ENCODE measurements at regions of chr2 and their contacts with region 1.

Region 1: DNA sequence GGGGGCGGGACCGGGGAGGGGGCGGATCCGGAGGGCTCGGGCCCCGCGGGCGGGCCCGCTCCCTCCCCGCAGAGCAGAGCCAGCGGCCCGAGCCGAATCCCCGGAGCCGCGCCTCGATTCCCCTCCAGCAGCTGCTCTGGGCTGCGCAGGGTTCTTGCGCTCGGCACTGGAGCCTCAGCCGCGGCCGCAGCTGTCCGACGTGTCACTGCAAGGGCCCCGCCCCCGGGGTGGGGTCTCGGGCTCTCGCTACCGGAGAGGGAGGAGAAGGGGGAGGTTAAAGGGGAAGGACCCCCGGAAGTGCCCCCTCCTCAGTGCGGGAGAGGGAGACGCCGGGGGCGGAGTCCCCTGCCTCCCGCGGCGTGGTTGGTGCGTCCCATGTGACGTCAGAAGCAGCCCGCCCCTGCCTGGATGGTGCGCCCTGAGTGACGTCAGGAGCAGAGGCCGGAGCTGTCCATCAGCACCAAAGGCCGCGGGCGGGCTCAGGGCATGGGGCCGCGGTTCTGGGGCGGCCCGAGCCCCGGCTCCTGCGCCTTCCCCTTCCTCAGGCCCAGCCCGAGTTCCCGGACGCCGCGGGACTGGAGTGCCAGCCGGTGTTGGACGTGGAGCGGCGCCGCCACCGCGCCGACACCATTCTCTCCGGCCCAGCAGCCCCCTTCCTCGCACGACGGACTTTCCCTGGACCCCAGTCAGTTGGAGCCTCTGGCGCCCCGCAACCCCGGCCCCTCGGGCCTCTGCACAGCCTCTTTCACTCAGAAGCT is at the starts of genes CHPF and TMEM198:
- DNase-seq: peak; percentile 97
- ATAC-seq: peak; percentile 91 to 97 (median 94)
- H3K4me3 ChIP-seq: peak within 1 kb of the TSS; percentile 40 to 92 (median 80)
- H3K27ac ChIP-seq: peak within 1 kb of the TSS; percentile 62 to 93 (median 90)
- H3K4me1 ChIP-seq: peaks cover 4 to 37% (median 32%) of the 10 kb centered on the region in 9 donors
- H3K27me3 ChIP-seq: peaks cover 0 to 59% (median 11%) of the 10 kb centered on the region in 7 donors
- CTCF ChIP-seq: no peak
- total RNA-seq, gene CHPF: 66.5 to 166 (median 95.9) TPM
- total RNA-seq, gene TMEM198: 0.59 to 3.5 (median 1.6) TPM

Region 2: GRCh38 chr2:218631837-218632236 is 911.9 kb before region 1 on chr2:
- intact Hi-C with region 1: no loop called
- DNase-seq: peak in 1 of 2 donors; percentile 18
- ATAC-seq: peak in 3 of 8 donors; percentile 39 to 77 (median 72)
- H3K4me3 ChIP-seq: no peak overlapping the region
- H3K27ac ChIP-seq: peak overlapping the region in 3 of 10 donors; percentile 24 to 44 (median 39)
- H3K4me1 ChIP-seq: peaks cover 0 to 12% (median 0%) of the 10 kb centered on the region in 9 donors
- H3K27me3 ChIP-seq: no peaks in the 10 kb centered on the region
- CTCF ChIP-seq: no peak

Region 3: DNA sequence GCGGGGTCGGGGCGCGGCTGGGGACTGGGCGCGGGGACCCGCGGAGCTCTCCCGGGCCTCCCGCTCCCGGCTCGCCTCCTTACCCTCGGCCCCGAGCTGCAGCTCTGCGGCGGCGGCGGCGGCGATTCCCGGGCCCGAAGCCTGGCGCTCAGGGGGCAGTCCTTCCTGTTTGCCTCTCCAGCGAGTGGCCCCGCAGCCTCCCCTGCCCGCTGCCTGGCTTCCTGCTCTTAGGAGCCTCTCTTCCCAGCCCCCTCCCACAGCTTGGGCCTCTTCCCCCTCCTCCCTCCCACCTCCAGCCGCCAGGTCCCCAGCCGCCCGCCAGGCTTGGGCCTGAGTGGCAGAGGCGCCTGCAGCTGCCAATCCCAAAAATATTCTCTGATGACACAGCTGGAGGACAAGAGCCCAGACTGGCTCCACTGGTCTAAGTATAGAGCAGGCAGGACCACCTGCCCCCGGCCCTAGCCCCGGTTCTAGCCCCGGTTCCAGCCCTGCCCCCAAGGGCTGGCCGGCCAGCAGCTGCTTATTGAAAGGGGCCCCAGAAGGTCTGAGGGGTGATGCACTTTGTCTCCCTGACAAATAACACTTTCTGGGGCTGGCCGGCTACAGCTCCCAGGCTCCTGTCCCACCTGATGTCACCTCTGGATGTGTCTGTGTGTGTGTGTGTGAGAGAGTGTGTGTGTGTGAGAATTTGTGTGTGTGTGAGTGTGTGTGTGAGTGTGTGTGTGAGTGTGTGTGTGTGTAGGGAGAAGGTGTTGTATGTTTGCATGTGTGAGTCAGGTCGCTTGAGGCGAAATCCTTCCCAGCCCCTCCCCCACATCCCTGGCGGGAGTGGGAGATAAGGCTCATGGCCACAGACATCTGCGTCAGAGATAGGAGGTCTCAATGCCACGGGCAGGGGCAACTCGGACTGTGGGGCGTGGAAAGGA is 27.8 kb after region 1 on chr2 and contains the start of gene OBSL1:
- intact Hi-C with region 1: loop called in 2 of 10 experiments (anchors 2 kb)
- DNase-seq: peak; percentile 80 to 84
- ATAC-seq: peak; percentile 77 to 90 (median 85)
- H3K4me3 ChIP-seq: peak within 1 kb of the TSS; percentile 9 to 95 (median 70)
- H3K27ac ChIP-seq: peak within 1 kb of the TSS; percentile 65 to 95 (median 88)
- H3K4me1 ChIP-seq: peaks cover 2 to 43% (median 13%) of the 10 kb centered on the region in 9 donors
- H3K27me3 ChIP-seq: peaks cover 0 to 40% (median 0%) of the 10 kb centered on the region in 7 donors
- CTCF ChIP-seq: no peak
- total RNA-seq, gene OBSL1: 161 to 277 (median 171) TPM

Region 4: GRCh38 chr2:219627103-219628100 is 83.6 kb after region 1 on chr2 and contains the start of gene SLC4A3:
- intact Hi-C with region 1: loop called in 2 of 10 experiments (anchors 5 kb)
- DNase-seq: peak in 1 of 2 donors; percentile 55
- ATAC-seq: peak in 7 of 8 donors; percentile 4 to 34 (median 14)
- H3K4me3 ChIP-seq: peak within 1 kb of the TSS in 9 of 10 donors; percentile 50 to 60 (median 58)
- H3K27ac ChIP-seq: peak within 1 kb of the TSS; percentile 79 to 99 (median 94)
- H3K4me1 ChIP-seq: peaks cover 3 to 77% (median 22%) of the 10 kb centered on the region in 9 donors
- H3K27me3 ChIP-seq: peaks cover 0 to 38% (median 9%) of the 10 kb centered on the region in 7 donors
- CTCF ChIP-seq: peak in 4 of 9 donors; percentile 11 to 40 (median 22)
- total RNA-seq, gene SLC4A3: 339 to 671 (median 422) TPM

Region 5: DNA sequence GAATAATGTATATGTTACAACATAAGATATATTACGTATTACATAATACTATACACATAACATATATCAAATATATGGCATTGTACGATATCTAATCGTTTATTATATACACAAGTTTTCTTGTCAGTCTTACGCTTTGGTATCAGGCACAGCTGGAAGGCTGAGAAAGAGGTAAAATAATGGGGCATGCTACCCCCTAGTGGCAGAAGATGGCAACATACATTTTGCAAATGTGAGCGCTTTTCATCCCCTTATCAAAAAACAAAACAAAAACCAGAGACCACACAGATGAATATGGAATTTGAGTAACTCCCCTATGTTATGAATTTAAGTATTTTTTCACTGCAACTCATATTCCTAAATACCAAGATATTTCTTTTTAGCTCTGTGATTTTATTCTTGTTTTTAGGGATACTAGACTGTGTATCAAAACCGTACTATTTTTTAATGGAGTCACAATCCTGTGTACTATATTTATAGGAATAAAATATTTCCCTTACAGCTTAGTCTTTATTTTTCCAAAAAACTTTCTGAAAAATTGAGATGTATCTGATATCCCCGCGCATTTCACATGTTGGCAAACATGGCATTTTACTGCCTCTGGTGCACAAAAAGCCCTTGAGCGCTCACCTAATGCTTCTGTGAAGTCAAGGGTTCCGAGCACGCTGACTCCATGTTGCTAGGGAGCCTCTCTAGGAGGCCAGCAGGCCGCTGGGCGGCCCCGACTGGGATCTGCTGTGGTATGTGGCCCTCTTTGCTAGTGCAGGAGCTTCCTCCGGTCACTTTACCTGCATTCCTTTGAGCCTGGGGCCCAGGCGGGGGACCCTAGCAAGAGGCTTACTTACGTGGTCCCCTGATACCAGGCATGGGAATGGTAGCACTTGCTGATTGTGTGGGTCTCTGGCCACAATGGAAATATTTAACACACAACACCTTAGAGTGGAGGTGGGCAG is 146.2 kb after region 1 on chr2:
- intact Hi-C with region 1: loop called in 8 of 10 experiments (anchors 1 to 5 kb)
- DNase-seq: peak in 1 of 2 donors; percentile 44
- ATAC-seq: peak; percentile 17 to 72 (median 59)
- H3K4me3 ChIP-seq: no peak overlapping the region
- H3K27ac ChIP-seq: peak overlapping the region in 6 of 10 donors; percentile 62 to 75 (median 68)
- H3K4me1 ChIP-seq: peaks cover 0 to 17% (median 8%) of the 10 kb centered on the region in 9 donors
- H3K27me3 ChIP-seq: peaks cover 0 to 16% (median 4%) of the 10 kb centered on the region in 7 donors
- CTCF ChIP-seq: peak; percentile 69 to 81 (median 79)

Region 6: GRCh38 chr2:220469201-220469600 is 925.4 kb after region 1 on chr2:
- intact Hi-C with region 1: no loop called
- DNase-seq: no peak
- ATAC-seq: peak in 2 of 8 donors; percentile 30 to 42
- H3K4me3 ChIP-seq: no peak overlapping the region
- H3K27ac ChIP-seq: no peak overlapping the region
- H3K4me1 ChIP-seq: peaks cover 0 to 6% (median 0%) of the 10 kb centered on the region in 9 donors
- H3K27me3 ChIP-seq: no peaks in the 10 kb centered on the region
- CTCF ChIP-seq: no peak